CD4-positive, alpha-beta memory T cell (primary cell): ENCODE measurements at regions of chr17 and their contacts with region 1.

Region 1: DNA sequence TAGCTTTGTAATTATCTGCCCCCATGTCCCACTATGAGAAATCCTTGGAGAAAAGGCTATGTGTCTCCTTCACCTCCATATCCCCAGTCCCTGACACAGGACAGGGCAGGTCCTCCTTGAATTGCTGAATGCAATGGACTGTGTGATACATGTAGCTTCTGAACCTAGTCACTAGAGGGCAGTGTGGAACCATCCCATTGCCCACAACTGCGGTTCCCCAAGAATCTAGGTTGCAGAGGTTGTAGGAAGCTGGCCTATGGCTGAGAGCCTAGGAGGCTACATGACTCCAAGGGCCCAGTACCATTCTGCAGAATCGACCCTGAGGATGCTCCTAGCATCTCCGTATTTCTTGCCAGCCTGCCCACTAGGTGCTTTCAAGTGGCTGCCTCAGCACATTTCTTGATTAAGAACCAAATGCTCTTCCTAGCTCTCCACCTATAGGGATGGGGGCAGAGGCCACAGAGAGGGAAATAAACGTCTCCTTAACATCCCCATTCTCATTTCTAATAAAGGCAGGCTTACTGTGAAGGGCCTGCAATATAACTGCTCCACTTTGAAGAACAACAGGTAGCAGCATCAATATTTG is 394.0 kb downstream of the CA10 start:
- DNase-seq: peak in 4 of 5 donors; percentile 24 to 43 (median 34)
- H3K4me3 ChIP-seq: no peak overlapping the region
- H3K4me3 Mint-ChIP-seq: no peak overlapping the region
- H3K27ac ChIP-seq: no peak overlapping the region
- H3K27ac Mint-ChIP-seq: no peak overlapping the region
- H3K4me1 ChIP-seq: no peaks in the 10 kb centered on the region
- H3K4me1 Mint-ChIP-seq: no peaks in the 10 kb centered on the region
- H3K27me3 ChIP-seq: no peaks in the 10 kb centered on the region
- H3K27me3 Mint-ChIP-seq: peaks cover 14 to 15% of the 10 kb centered on the region in 2 donors

Region 2: DNA sequence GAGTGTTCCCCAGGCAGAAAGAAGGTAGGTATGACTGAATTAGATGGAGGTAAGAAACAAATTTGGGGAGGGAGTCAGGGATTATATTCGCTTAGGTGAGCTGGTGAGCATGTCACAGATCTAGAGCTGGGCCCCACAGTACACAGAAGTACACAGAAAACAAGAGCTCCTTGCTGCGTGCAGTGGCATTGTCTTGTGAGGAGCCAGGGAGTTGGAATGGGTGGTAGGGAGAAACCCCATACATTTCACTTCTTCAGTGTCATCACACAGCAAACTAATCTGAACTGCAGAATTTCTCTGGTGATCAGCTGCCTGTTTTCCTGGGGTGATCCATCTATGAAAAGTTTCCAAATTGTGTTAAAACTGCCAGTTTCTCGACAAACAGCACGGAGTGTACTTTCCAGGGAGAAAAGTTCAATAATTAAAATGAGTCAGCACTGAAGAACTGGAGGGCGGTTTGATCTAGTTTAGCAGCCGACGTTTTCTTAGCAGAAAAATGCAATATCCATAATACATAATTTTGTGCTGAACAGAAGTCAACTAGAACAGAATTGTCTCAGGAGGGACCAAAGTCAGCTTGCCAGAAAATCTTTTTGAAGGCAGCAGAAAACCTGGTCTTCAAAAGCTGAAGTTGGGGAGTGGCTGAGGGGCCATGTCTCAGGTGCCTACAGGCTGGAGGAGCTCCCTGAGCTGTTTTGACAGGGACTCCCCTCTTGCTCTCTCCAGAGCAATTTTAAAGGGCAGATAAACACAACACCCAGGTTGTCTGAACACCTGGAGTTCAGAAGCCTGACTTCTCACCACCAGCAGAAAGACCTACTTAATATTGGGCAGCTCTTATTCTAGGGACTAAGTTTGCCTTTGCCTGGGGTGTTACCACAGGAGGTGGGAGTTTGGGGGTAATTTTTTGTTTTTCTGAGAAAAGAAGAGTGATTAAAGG is 54.5 kb before region 1 on chr17:
- CTCF ChIA-PET with region 1: no interaction called
- POLR2A ChIA-PET with region 1: no interaction called
- intact Hi-C with region 1: no loop called
- DNase-seq: no peak
- H3K4me3 ChIP-seq: no peak overlapping the region
- H3K4me3 Mint-ChIP-seq: no peak overlapping the region
- H3K27ac ChIP-seq: no peak overlapping the region
- H3K27ac Mint-ChIP-seq: no peak overlapping the region
- H3K4me1 ChIP-seq: no peaks in the 10 kb centered on the region
- H3K4me1 Mint-ChIP-seq: no peaks in the 10 kb centered on the region
- H3K27me3 ChIP-seq: peaks cover 5% of the 10 kb centered on the region
- H3K27me3 Mint-ChIP-seq: peaks cover 9 to 22% of the 10 kb centered on the region in 2 donors

Region 3: GRCh38 chr17:51748749-51749539 is 15.5 kb before region 1 on chr17:
- CTCF ChIA-PET with region 1: interaction called, 44 read pairs
- POLR2A ChIA-PET with region 1: no interaction called
- intact Hi-C with region 1: no loop called
- DNase-seq: no peak
- H3K4me3 ChIP-seq: no peak overlapping the region
- H3K4me3 Mint-ChIP-seq: no peak overlapping the region
- H3K27ac ChIP-seq: no peak overlapping the region
- H3K27ac Mint-ChIP-seq: no peak overlapping the region
- H3K4me1 ChIP-seq: no peaks in the 10 kb centered on the region
- H3K4me1 Mint-ChIP-seq: no peaks in the 10 kb centered on the region
- H3K27me3 ChIP-seq: no peaks in the 10 kb centered on the region
- H3K27me3 Mint-ChIP-seq: no peaks in the 10 kb centered on the region

Region 4: GRCh38 chr17:52106638-52107261 is 342.3 kb after region 1 on chr17:
- CTCF ChIA-PET with region 1: interaction called, 11 read pairs
- POLR2A ChIA-PET with region 1: no interaction called
- intact Hi-C with region 1: no loop called
- DNase-seq: peak in 4 of 5 donors; percentile 5 to 37 (median 10)
- H3K4me3 ChIP-seq: no peak overlapping the region
- H3K4me3 Mint-ChIP-seq: no peak overlapping the region
- H3K27ac ChIP-seq: no peak overlapping the region
- H3K27ac Mint-ChIP-seq: no peak overlapping the region
- H3K4me1 ChIP-seq: no peaks in the 10 kb centered on the region
- H3K4me1 Mint-ChIP-seq: no peaks in the 10 kb centered on the region
- H3K27me3 ChIP-seq: no peaks in the 10 kb centered on the region
- H3K27me3 Mint-ChIP-seq: peaks cover 1 to 2% of the 10 kb centered on the region in 2 donors